ENCODE measurements at regions of chr2 and their contacts with region 1.

Region 1: DNA sequence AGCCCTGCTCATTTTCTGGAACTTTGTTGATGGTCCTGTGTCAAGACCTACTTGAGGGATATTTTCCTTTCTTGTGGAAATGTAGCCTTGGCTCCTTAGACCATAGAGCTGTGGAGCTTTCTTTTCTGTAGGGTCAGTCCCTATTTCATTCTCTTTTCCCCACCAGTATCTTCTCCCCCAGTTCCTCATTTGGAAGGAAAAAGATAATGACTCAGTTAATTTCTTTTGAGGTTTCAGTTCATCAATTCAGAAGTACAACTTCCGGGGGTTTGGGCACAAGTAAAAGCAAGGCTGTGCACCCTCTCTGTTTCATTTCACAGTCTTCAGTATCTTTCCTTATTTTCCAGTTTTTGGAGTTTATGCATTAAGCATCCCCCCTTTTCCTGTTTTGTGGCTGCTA is 70.7 kb downstream of the CDC42EP3 start:
- DNase-seq: no peak
- ATAC-seq: peak; percentile 18
- H3K4me3 Mint-ChIP-seq: peak overlapping the region; percentile 59
- H3K27ac Mint-ChIP-seq: peak overlapping the region; percentile 68
- H3K4me1 Mint-ChIP-seq: peaks cover 29% of the 10 kb centered on the region
- H3K27me3 Mint-ChIP-seq: no peaks in the 10 kb centered on the region

Region 2: DNA sequence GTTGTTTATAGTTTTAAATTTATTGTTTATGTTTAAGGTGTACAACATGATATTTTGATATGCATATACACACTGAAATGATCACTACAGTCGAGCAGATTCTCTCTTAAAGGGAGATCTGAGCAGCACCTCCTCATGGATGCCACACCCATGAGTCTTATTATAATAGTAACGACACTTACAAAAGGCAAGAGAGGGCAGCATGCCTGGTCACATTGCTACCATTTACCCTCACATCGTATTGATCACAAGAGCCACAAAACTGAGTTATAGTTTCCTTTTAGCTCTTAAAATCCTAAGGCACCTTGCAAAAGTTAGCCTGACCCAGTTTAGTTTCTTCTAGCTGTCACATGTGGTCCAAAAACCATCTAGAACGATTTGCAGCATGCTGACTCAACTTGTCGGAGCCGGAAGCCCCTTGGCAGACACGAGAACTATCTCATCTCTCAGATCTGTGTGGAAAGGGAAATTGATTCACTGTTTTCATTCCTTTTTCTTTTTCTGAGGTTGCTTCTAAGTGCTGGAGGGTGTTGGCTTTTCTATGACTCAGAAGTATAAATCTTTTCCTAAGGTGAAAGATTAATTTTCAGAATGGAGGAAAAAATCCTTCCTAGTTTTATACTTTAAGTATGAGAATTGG is 14.6 kb before region 1 on chr2:
- POLR2A ChIA-PET with region 1: interaction called, 11 read pairs
- DNase-seq: peak; percentile 48
- ATAC-seq: peak; percentile 84
- H3K4me3 Mint-ChIP-seq: peak overlapping the region; percentile 33
- H3K27ac Mint-ChIP-seq: peak overlapping the region; percentile 72
- H3K4me1 Mint-ChIP-seq: peaks cover 65% of the 10 kb centered on the region
- H3K27me3 Mint-ChIP-seq: no peaks in the 10 kb centered on the region